Vagina (tissue), 2 donors: ENCODE measurements at regions of chr19 and their contacts with region 1.

Region 1: DNA sequence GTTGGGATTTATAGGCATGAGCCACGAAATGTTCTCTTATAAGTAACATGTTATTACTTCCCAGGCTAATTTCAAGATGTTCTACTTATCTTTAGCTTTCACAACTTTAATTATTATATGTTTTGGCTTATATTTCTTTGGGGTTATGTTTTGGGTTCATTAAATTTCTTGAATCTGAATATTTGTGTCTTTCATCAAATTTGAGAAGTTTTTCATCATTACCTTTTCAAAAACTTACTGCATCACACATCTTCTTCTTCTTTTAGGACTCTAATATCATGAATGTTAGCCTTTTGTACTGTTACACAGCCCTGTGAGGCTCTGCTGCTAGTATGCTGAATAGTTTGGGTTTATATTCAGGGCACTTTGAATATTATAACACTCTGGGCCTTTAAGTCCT is 9.7 kb upstream of the ZNF266 start:
- DNase-seq: no peak
- H3K4me3 ChIP-seq: no peak overlapping the region
- H3K27ac ChIP-seq: no peak overlapping the region
- H3K4me1 ChIP-seq: no peaks in the 10 kb centered on the region
- H3K27me3 ChIP-seq: no peaks in the 10 kb centered on the region
- CTCF ChIP-seq: no peak
- POLR2A ChIP-seq: no peak

Region 2: GRCh38 chr19:9381367-9381785 is 63.7 kb before region 1 on chr19:
- intact Hi-C with region 1: no loop called
- DNase-seq: no peak
- H3K4me3 ChIP-seq: no peak overlapping the region
- H3K27ac ChIP-seq: no peak overlapping the region
- H3K4me1 ChIP-seq: no peaks in the 10 kb centered on the region
- H3K27me3 ChIP-seq: no peaks in the 10 kb centered on the region
- CTCF ChIP-seq: no peak
- POLR2A ChIP-seq: no peak

Region 3: DNA sequence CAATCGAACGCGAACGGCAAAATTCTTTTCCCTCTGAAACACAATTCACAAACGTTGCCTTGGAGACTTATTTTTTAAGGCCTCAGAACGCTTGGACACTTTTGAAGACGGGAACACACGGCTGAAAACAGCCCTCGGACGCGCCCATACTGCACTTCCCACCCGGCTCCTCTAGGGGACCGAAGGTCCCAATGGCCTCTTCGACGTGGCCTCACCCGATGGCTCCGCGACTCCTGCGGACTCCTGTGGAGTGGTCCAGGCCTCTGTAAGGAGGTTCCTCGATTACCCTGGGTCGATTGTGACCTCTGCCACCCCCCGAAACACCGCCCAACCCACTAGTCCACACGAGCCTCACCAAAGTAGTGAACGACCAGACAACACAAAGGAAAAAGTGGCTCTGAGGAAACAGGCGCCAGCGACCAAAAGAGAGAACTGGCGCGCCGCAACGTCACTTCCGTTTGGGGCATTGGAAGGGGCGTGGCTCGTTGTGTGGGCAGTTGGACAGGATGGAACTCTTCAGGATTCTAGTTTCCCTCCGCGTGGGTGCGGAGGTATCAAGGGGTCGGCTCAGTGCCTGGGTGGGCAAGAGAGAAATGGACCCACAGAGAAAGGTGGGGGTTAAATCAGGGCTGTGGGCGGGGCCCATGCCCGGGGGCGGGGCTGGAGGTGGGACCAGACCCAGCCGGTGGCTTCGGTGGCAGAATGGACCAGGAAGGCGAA is 53.3 kb after region 1 on chr19 and contains the start of gene ZNF560:
- intact Hi-C with region 1: loop called (anchors 1 kb)
- DNase-seq: no peak
- H3K4me3 ChIP-seq: no peak within 1 kb of the TSS
- H3K27ac ChIP-seq: no peak within 1 kb of the TSS
- H3K4me1 ChIP-seq: no peaks in the 10 kb centered on the region
- H3K27me3 ChIP-seq: no peaks in the 10 kb centered on the region
- CTCF ChIP-seq: no peak
- POLR2A ChIP-seq: no peak
- total RNA-seq, gene ZNF560: 0.49 TPM